Naive thymus-derived CD4-positive, alpha-beta T cell (primary cell): ENCODE measurements at regions of chr19 and their contacts with region 1.

Region 1: DNA sequence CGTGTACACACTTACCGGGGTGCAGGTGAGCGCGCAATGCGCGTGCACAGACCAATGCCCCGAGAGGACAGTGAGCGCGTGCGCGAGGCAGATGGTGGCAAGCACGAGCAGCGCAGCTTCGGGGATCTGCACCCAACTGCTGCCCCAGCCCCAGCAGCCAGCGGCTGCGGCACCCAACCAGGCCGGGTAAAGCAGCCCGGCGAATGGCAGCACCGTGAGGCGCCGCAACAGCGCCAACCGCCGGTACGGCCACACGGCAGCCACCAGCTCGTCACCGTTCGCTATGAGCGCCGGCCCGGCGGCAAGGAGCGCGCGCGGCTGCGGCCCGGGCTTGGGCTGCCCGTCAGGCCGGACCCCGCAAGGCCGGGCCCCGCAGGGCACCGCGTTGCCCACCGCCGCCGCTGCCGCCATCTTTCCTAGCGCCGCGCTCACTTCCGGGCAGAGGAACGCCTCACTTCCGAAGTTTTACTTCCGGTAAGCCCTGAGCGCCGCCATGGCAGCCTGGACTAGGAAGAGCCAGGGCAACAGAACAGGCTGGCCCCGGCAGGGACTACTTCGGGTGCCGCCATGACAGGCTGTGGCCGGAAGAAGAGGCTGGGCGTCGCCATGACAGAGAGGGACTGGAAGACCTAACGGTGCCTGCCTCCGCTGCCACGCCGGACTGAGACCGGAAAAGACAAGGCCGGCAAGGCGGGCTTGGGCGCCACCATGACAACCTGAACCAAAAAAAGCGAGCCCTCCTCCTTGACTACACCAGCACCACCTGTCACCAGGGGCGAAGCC is at the start of gene ATP13A1:
- DNase-seq: peak; percentile 83 to 96 (median 93)
- ATAC-seq: peak; percentile 85
- H3K4me3 ChIP-seq: peak within 1 kb of the TSS; percentile 96
- H3K4me3 Mint-ChIP-seq: peak within 1 kb of the TSS; percentile 79 to 99 (median 96)
- H3K27ac ChIP-seq: peak within 1 kb of the TSS; percentile 98
- H3K27ac Mint-ChIP-seq: peak within 1 kb of the TSS; percentile 93 to 99 (median 99)
- H3K4me1 ChIP-seq: peaks cover 30 to 32% of the 10 kb centered on the region in 2 donors
- H3K4me1 Mint-ChIP-seq: peaks cover 20 to 44% (median 36%) of the 10 kb centered on the region in 7 donors
- H3K27me3 ChIP-seq: no peaks in the 10 kb centered on the region
- H3K27me3 Mint-ChIP-seq: peaks cover 0 to 3% (median 0%) of the 10 kb centered on the region in 5 donors
- total RNA-seq, gene ATP13A1: 86.5 to 138 (median 98.9) TPM

Region 2: GRCh38 chr19:19192078-19192882 is 471.2 kb before region 1 on chr19 and contains the starts of genes BORCS8 and RFXANK:
- CTCF ChIA-PET with region 1: no interaction called
- POLR2A ChIA-PET with region 1: no interaction called
- intact Hi-C with region 1: loop called (anchors 1 to 2 kb)
- DNase-seq: peak; percentile 89 to 99 (median 99)
- ATAC-seq: peak; percentile 95
- H3K4me3 ChIP-seq: peak within 1 kb of the TSS; percentile 100
- H3K4me3 Mint-ChIP-seq: peak within 1 kb of the TSS; percentile 94 to 100 (median 98)
- H3K27ac ChIP-seq: peak within 1 kb of the TSS; percentile 100
- H3K27ac Mint-ChIP-seq: peak within 1 kb of the TSS; percentile 99 to 100 (median 99)
- H3K4me1 ChIP-seq: peaks cover 13 to 22% of the 10 kb centered on the region in 2 donors
- H3K4me1 Mint-ChIP-seq: peaks cover 23 to 68% (median 45%) of the 10 kb centered on the region in 7 donors
- H3K27me3 ChIP-seq: no peaks in the 10 kb centered on the region
- H3K27me3 Mint-ChIP-seq: no peaks in the 10 kb centered on the region
- total RNA-seq, gene BORCS8: 22.6 to 48.2 (median 42.7) TPM
- total RNA-seq, gene RFXANK: 60.8 to 114 (median 74.9) TPM

Region 3: DNA sequence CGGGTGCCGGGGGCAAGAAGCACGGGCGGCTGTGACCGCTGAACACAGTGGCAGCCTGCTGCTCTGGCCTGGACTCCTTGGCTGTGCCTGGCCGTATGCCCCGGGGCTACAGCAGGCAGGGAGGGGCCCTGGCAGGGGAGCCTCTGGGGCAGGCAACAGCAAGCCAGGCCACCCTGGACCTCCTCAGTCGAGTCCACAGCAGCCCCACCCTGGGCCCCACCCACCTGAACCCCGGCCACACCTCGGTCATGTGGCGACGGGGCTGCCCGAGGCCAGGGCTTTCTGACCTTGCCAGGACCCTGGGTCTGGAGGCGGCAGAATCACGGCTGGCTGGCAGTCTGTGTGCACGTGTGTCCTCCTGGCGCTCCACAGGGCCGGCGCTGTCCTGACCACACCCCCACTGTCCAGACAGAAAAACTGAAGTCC is 116.7 kb before region 1 on chr19:
- CTCF ChIA-PET with region 1: no interaction called
- POLR2A ChIA-PET with region 1: no interaction called
- intact Hi-C with region 1: no loop called
- DNase-seq: no peak
- ATAC-seq: no peak
- H3K4me3 ChIP-seq: no peak overlapping the region
- H3K4me3 Mint-ChIP-seq: no peak overlapping the region
- H3K27ac ChIP-seq: no peak overlapping the region
- H3K27ac Mint-ChIP-seq: peak overlapping the region in 1 of 9 donors; percentile 42
- H3K4me1 ChIP-seq: peaks cover 3 to 4% of the 10 kb centered on the region in 2 donors
- H3K4me1 Mint-ChIP-seq: peaks cover 0 to 9% (median 8%) of the 10 kb centered on the region in 7 donors
- H3K27me3 ChIP-seq: no peaks in the 10 kb centered on the region
- H3K27me3 Mint-ChIP-seq: no peaks in the 10 kb centered on the region

Region 4: GRCh38 chr19:19597809-19598306 is 65.6 kb before region 1 on chr19:
- CTCF ChIA-PET with region 1: no interaction called
- POLR2A ChIA-PET with region 1: interaction called, 44 read pairs
- intact Hi-C with region 1: loop called (anchors 1 to 2 kb)
- DNase-seq: peak in 8 of 9 donors; percentile 54 to 90 (median 84)
- ATAC-seq: peak; percentile 87
- H3K4me3 ChIP-seq: peak overlapping the region; percentile 52
- H3K4me3 Mint-ChIP-seq: peak overlapping the region; percentile 61 to 85 (median 74)
- H3K27ac ChIP-seq: peak overlapping the region; percentile 96
- H3K27ac Mint-ChIP-seq: peak overlapping the region; percentile 90 to 99 (median 97)
- H3K4me1 ChIP-seq: peaks cover 53 to 54% of the 10 kb centered on the region in 2 donors
- H3K4me1 Mint-ChIP-seq: peaks cover 29 to 75% (median 66%) of the 10 kb centered on the region in 7 donors
- H3K27me3 ChIP-seq: no peaks in the 10 kb centered on the region
- H3K27me3 Mint-ChIP-seq: no peaks in the 10 kb centered on the region

Region 5: GRCh38 chr19:19677579-19677978 is 14.1 kb after region 1 on chr19:
- CTCF ChIA-PET with region 1: no interaction called
- POLR2A ChIA-PET with region 1: interaction called, 48 read pairs
- intact Hi-C with region 1: no loop called
- DNase-seq: no peak
- ATAC-seq: no peak
- H3K4me3 ChIP-seq: peak overlapping the region; percentile 22
- H3K4me3 Mint-ChIP-seq: peak overlapping the region in 6 of 10 donors; percentile 9 to 71 (median 48)
- H3K27ac ChIP-seq: no peak overlapping the region
- H3K27ac Mint-ChIP-seq: peak overlapping the region in 4 of 9 donors; percentile 28 to 58 (median 45)
- H3K4me1 ChIP-seq: no peaks in the 10 kb centered on the region
- H3K4me1 Mint-ChIP-seq: peaks cover 0 to 26% (median 17%) of the 10 kb centered on the region in 7 donors
- H3K27me3 ChIP-seq: no peaks in the 10 kb centered on the region
- H3K27me3 Mint-ChIP-seq: no peaks in the 10 kb centered on the region

Region 6: GRCh38 chr19:19732579-19733501 is 69.4 kb after region 1 on chr19 and contains the start of gene ZNF14:
- CTCF ChIA-PET with region 1: interaction called, 5 read pairs
- POLR2A ChIA-PET with region 1: interaction called, 119 read pairs
- intact Hi-C with region 1: loop called (anchors 1 to 2 kb)
- DNase-seq: peak; percentile 69 to 91 (median 89)
- ATAC-seq: peak; percentile 100
- H3K4me3 ChIP-seq: peak within 1 kb of the TSS; percentile 78
- H3K4me3 Mint-ChIP-seq: peak within 1 kb of the TSS; percentile 93 to 100 (median 98)
- H3K27ac ChIP-seq: peak within 1 kb of the TSS; percentile 87
- H3K27ac Mint-ChIP-seq: peak within 1 kb of the TSS; percentile 93 to 98 (median 95)
- H3K4me1 ChIP-seq: peaks cover 3 to 7% of the 10 kb centered on the region in 2 donors
- H3K4me1 Mint-ChIP-seq: peaks cover 16 to 39% (median 21%) of the 10 kb centered on the region in 7 donors
- H3K27me3 ChIP-seq: no peaks in the 10 kb centered on the region
- H3K27me3 Mint-ChIP-seq: no peaks in the 10 kb centered on the region
- total RNA-seq, gene ZNF14: 7.0 to 35.0 (median 30.3) TPM

Region 7: DNA sequence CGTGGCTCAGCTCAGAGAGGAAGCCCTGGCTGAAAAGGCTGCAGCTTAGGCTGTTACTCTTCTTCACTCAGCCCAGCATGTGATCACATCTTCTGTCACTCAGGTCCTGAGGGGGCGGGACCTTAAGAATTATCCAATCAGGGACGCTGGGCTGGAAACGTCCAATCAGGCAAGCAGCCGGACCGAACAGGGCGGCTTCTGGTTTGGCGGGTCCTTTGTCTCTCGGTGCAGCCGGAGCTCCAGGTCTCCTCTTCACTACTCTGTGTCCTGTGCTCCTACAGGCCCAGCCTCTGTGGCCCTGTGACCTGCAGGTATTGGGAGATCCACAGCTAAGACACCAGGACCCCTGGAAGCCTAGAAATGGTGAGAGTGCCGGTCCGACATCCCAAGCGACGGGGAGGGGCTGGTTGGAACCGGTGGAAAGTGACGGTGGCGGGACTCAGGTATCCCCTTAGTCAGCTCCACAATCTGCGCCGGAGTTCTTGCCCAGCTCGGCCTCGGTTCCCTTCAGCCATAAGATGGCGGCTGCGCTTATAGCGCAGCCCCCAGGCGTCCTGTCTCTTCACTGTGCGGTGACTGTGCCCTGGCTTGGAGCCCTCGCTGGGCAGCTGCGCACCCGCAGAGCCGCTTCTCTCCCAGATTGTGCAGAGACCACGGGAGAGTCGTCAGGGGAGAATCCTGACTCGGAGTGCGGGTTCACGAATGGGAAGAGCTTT is 237.4 kb after region 1 on chr19 and contains the start of gene ZNF93:
- CTCF ChIA-PET with region 1: no interaction called
- POLR2A ChIA-PET with region 1: interaction called, 19 read pairs
- intact Hi-C with region 1: loop called (anchors 1 to 2 kb)
- DNase-seq: peak; percentile 67 to 94 (median 91)
- ATAC-seq: peak; percentile 99
- H3K4me3 ChIP-seq: peak within 1 kb of the TSS; percentile 83
- H3K4me3 Mint-ChIP-seq: peak within 1 kb of the TSS; percentile 90 to 100 (median 97)
- H3K27ac ChIP-seq: peak within 1 kb of the TSS; percentile 77
- H3K27ac Mint-ChIP-seq: peak within 1 kb of the TSS; percentile 82 to 97 (median 92)
- H3K4me1 ChIP-seq: no peaks in the 10 kb centered on the region
- H3K4me1 Mint-ChIP-seq: peaks cover 16 to 40% (median 32%) of the 10 kb centered on the region in 7 donors
- H3K27me3 ChIP-seq: no peaks in the 10 kb centered on the region
- H3K27me3 Mint-ChIP-seq: no peaks in the 10 kb centered on the region
- total RNA-seq, gene ZNF93: 3.4 to 11.6 (median 7.2) TPM

Region 8: GRCh38 chr19:20565321-20566018 is 902.0 kb after region 1 on chr19 and contains the start of gene ZNF737:
- CTCF ChIA-PET with region 1: no interaction called
- POLR2A ChIA-PET with region 1: no interaction called
- intact Hi-C with region 1: loop called in 1 of 2 experiments (anchors 10 kb)
- DNase-seq: peak; percentile 78 to 95 (median 89)
- ATAC-seq: peak; percentile 97
- H3K4me3 ChIP-seq: peak within 1 kb of the TSS; percentile 92
- H3K4me3 Mint-ChIP-seq: peak within 1 kb of the TSS; percentile 94 to 100 (median 99)
- H3K27ac ChIP-seq: peak within 1 kb of the TSS; percentile 82
- H3K27ac Mint-ChIP-seq: peak within 1 kb of the TSS; percentile 94 to 99 (median 97)
- H3K4me1 ChIP-seq: no peaks in the 10 kb centered on the region
- H3K4me1 Mint-ChIP-seq: peaks cover 0 to 39% (median 37%) of the 10 kb centered on the region in 7 donors
- H3K27me3 ChIP-seq: no peaks in the 10 kb centered on the region
- H3K27me3 Mint-ChIP-seq: no peaks in the 10 kb centered on the region
- total RNA-seq, gene ZNF737: 13.3 to 43.2 (median 14.9) TPM